GM12878 (cell line): ENCODE measurements at regions of chr14 and their contacts with region 1.

Region 1: GRCh38 chr14:73295198-73295796 is 58.0 kb downstream of the PAPLN start:
- DNase-seq: no peak
- ATAC-seq: peak; percentile 23; the same call in 2 of the 3 replicates
- H3K4me3 ChIP-seq: no peak overlapping the region
- H3K27ac ChIP-seq: no peak overlapping the region
- H3K4me1 ChIP-seq: peaks cover 23% of the 10 kb centered on the region
- H3K27me3 ChIP-seq: no peaks in the 10 kb centered on the region
- CTCF ChIP-seq: peak; percentile 55 to 75 (median 58); a peak in 5 of 6 replicates
- EP300 ChIP-seq: no peak
- POLR2A ChIP-seq: no peak
- RAD21 ChIP-seq: peak; percentile 64

Region 2: GRCh38 chr14:73223049-73223448 is 72.2 kb before region 1 on chr14:
- CTCF ChIA-PET with region 1: interaction called, 16 read pairs
- POLR2A ChIA-PET with region 1: no interaction called
- RAD21 ChIA-PET with region 1: interaction called, 15 read pairs
- SMC1A ChIA-PET with region 1: interaction called, 10 read pairs
- in situ Hi-C with region 1: no loop called
- intact Hi-C with region 1: no loop called
- DNase-seq: peak; percentile 63
- ATAC-seq: peak; percentile 96
- H3K4me3 ChIP-seq: no peak overlapping the region
- H3K27ac ChIP-seq: peak overlapping the region; percentile 20; the same call in 1 of the 2 replicates
- H3K4me1 ChIP-seq: peaks cover 9% of the 10 kb centered on the region; the same call in 1 of the 2 replicates
- H3K27me3 ChIP-seq: no peaks in the 10 kb centered on the region
- CTCF ChIP-seq: peak in 1 of 3 experiments; percentile 50; a peak in 2 of 6 replicates
- EP300 ChIP-seq: no peak
- POLR2A ChIP-seq: peak; percentile 49; the same call in 1 of the 2 replicates
- RAD21 ChIP-seq: peak; percentile 32; the same call in 1 of the 2 replicates

Region 3: GRCh38 chr14:73280903-73281302 is 14.4 kb before region 1 on chr14:
- CTCF ChIA-PET with region 1: interaction called, 5 read pairs
- POLR2A ChIA-PET with region 1: interaction called, 3 read pairs
- RAD21 ChIA-PET with region 1: interaction called, 3 read pairs
- SMC1A ChIA-PET with region 1: interaction called, 42 read pairs
- in situ Hi-C with region 1: no loop called
- intact Hi-C with region 1: no loop called
- DNase-seq: no peak
- ATAC-seq: no peak
- H3K4me3 ChIP-seq: no peak overlapping the region
- H3K27ac ChIP-seq: no peak overlapping the region
- H3K4me1 ChIP-seq: no peaks in the 10 kb centered on the region
- H3K27me3 ChIP-seq: no peaks in the 10 kb centered on the region
- CTCF ChIP-seq: 0 out of 6 replicates have a peak, but pooled peaks of 1 of the 3 experiments have one; percentile 2
- EP300 ChIP-seq: no peak
- POLR2A ChIP-seq: no peak
- RAD21 ChIP-seq: no peak

Region 4: DNA sequence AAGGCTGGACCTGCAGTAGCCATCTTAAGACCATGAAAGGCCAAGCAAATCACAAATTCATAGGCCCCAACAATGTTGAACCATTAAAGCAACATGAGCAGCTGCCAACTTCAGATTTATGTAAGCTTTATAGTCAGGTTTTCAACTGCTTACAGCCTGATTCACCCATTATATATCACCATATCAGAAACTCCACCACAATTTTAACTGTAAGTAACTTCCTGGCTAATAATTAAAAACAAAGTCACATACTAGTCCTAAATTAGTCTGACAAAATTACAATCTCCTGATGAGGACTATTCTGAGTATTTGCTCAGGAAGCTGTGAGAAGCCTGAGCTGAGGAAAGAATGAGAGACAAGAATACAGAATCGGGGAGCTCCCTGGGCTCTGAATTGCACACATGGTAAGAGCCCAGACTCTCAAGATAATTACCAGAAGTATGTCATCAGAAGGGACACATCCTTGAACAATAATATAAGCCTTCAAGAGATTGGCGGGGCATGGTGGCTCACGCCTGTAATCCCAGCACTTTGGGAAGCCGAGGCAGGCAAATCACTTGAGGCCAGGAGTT is 108.0 kb after region 1 on chr14:
- CTCF ChIA-PET with region 1: interaction called, 28 read pairs
- POLR2A ChIA-PET with region 1: interaction called, 6 read pairs
- RAD21 ChIA-PET with region 1: interaction called, 41 read pairs
- SMC1A ChIA-PET with region 1: interaction called, 55 read pairs
- in situ Hi-C with region 1: no loop called
- intact Hi-C with region 1: no loop called
- DNase-seq: no peak
- ATAC-seq: peak; percentile 23
- H3K4me3 ChIP-seq: no peak overlapping the region
- H3K27ac ChIP-seq: peak overlapping the region; percentile 45
- H3K4me1 ChIP-seq: peaks cover 28% of the 10 kb centered on the region
- H3K27me3 ChIP-seq: no peaks in the 10 kb centered on the region
- CTCF ChIP-seq: no peak
- EP300 ChIP-seq: no peak
- POLR2A ChIP-seq: no peak
- RAD21 ChIP-seq: no peak

Region 5: GRCh38 chr14:73458151-73458976 is 163.1 kb after region 1 on chr14 and contains the start of gene NUMB:
- CTCF ChIA-PET with region 1: interaction called, 252 read pairs
- POLR2A ChIA-PET with region 1: interaction called, 11 read pairs
- RAD21 ChIA-PET with region 1: interaction called, 591 read pairs
- SMC1A ChIA-PET with region 1: interaction called, 311 read pairs
- in situ Hi-C with region 1: no loop called
- intact Hi-C with region 1: no loop called
- DNase-seq: peak; percentile 100
- ATAC-seq: peak; percentile 94
- H3K4me3 ChIP-seq: peak within 1 kb of the TSS; percentile 97
- H3K27ac ChIP-seq: peak within 1 kb of the TSS; percentile 71
- H3K4me1 ChIP-seq: peaks cover 4% of the 10 kb centered on the region; the same call in 1 of the 2 replicates
- H3K27me3 ChIP-seq: no peaks in the 10 kb centered on the region
- CTCF ChIP-seq: 0 out of 6 replicates have a peak, but pooled peaks of 1 of the 3 experiments have one; percentile 7
- EP300 ChIP-seq: no peak
- POLR2A ChIP-seq: peak; percentile 94
- RAD21 ChIP-seq: no peak
- polyA plus RNA-seq, gene NUMB: 29.8 to 30.9 TPM

Region 6: GRCh38 chr14:73477618-73478266 is 182.4 kb after region 1 on chr14:
- CTCF ChIA-PET with region 1: interaction called, 252 read pairs
- POLR2A ChIA-PET with region 1: interaction called, 18 read pairs
- RAD21 ChIA-PET with region 1: interaction called, 591 read pairs
- SMC1A ChIA-PET with region 1: interaction called, 311 read pairs
- in situ Hi-C with region 1: no loop called
- intact Hi-C with region 1: loop called (anchors 1 kb)
- DNase-seq: peak; percentile 90
- ATAC-seq: peak; percentile 88
- H3K4me3 ChIP-seq: no peak overlapping the region
- H3K27ac ChIP-seq: peak overlapping the region; percentile 68
- H3K4me1 ChIP-seq: peaks cover 17% of the 10 kb centered on the region
- H3K27me3 ChIP-seq: no peaks in the 10 kb centered on the region
- CTCF ChIP-seq: no peak
- EP300 ChIP-seq: peak; percentile 73 to 89; a peak in 2 of 4 replicates
- POLR2A ChIP-seq: no peak
- RAD21 ChIP-seq: peak; percentile 24; the same call in 1 of the 2 replicates

Region 7: DNA sequence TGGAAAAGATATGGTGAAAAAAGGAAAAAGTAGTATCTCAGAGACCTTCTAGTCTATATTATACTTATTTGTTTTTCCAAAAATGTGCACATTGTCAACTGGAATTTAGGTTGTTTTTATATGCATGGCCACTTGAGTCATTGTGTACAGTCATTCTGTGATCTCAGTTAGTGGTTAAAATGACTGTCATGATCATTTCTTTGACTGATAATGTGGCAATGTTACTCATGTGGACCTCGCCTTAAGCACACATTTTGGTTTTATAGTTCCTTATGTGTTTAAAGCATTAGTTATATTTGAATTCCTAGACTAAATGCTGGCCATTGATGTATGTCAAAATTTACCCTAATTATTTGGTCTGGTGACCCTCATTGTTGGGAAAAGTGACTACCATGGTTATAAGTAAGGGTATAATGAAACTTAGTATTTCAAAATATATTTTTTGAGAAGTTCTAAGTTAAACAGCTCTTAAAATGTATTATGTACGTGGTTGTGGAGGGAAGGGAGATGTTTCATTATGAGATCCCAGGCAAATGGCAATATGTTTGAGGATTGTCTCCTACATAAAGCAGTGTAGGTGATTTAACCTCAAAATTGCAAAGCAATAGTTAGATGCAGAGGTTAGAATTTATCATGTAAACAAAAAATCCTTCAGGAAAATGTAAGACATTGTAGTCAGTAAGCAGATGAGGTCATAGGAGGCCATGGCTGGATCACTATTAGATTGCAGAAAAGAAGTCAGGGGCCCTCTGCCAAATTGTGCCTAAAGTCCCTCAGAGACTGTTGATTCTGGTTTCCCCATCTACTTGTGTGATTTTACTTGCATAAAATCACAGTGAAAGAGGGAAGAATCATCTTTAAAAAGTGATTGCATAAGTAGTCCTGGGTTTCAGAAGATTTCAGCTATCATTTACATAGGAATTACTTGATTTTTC is 401.4 kb after region 1 on chr14:
- CTCF ChIA-PET with region 1: no interaction called
- POLR2A ChIA-PET with region 1: no interaction called
- RAD21 ChIA-PET with region 1: no interaction called
- SMC1A ChIA-PET with region 1: no interaction called
- in situ Hi-C with region 1: no loop called
- intact Hi-C with region 1: loop called (anchors 5 kb)
- DNase-seq: peak; percentile 88
- ATAC-seq: peak; percentile 92
- H3K4me3 ChIP-seq: peak overlapping the region; percentile 59; the same call in 1 of the 2 replicates
- H3K27ac ChIP-seq: peak overlapping the region; percentile 97
- H3K4me1 ChIP-seq: peaks cover 21% of the 10 kb centered on the region
- H3K27me3 ChIP-seq: no peaks in the 10 kb centered on the region
- CTCF ChIP-seq: no peak
- EP300 ChIP-seq: peak; percentile 72 to 97
- POLR2A ChIP-seq: no peak
- RAD21 ChIP-seq: no peak